Naive thymus-derived CD4-positive, alpha-beta T cell (primary cell): ENCODE measurements at regions of chr6 and their contacts with region 1.

Region 1: GRCh38 chr6:13711733-13712598 is at the start of gene RANBP9:
- DNase-seq: peak; percentile 86 to 92 (median 90)
- ATAC-seq: peak; percentile 90
- H3K4me3 ChIP-seq: peak within 1 kb of the TSS; percentile 85
- H3K4me3 Mint-ChIP-seq: peak within 1 kb of the TSS; percentile 91 to 100 (median 98)
- H3K27ac ChIP-seq: peak within 1 kb of the TSS; percentile 94
- H3K27ac Mint-ChIP-seq: peak within 1 kb of the TSS; percentile 93 to 99 (median 98)
- H3K4me1 ChIP-seq: peaks cover 12 to 15% of the 10 kb centered on the region in 2 donors
- H3K4me1 Mint-ChIP-seq: peaks cover 31 to 58% (median 45%) of the 10 kb centered on the region in 7 donors
- H3K27me3 ChIP-seq: no peaks in the 10 kb centered on the region
- H3K27me3 Mint-ChIP-seq: no peaks in the 10 kb centered on the region
- total RNA-seq, gene RANBP9: 45.4 to 56.9 (median 49.2) TPM

Region 2: GRCh38 chr6:13487122-13488014 is 224.6 kb before region 1 on chr6 and contains the start of gene GFOD1:
- CTCF ChIA-PET with region 1: no interaction called
- POLR2A ChIA-PET with region 1: no interaction called
- intact Hi-C with region 1: loop called (anchors 1 kb)
- DNase-seq: peak; percentile 33 to 87 (median 54)
- ATAC-seq: peak; percentile 90
- H3K4me3 ChIP-seq: peak within 1 kb of the TSS; percentile 80
- H3K4me3 Mint-ChIP-seq: peak within 1 kb of the TSS; percentile 78 to 96 (median 92)
- H3K27ac ChIP-seq: peak within 1 kb of the TSS; percentile 23
- H3K27ac Mint-ChIP-seq: peak within 1 kb of the TSS in 7 of 9 donors; percentile 35 to 76 (median 65)
- H3K4me1 ChIP-seq: peaks cover 4 to 9% of the 10 kb centered on the region in 2 donors
- H3K4me1 Mint-ChIP-seq: peaks cover 23 to 40% (median 30%) of the 10 kb centered on the region in 7 donors
- H3K27me3 ChIP-seq: no peaks in the 10 kb centered on the region
- H3K27me3 Mint-ChIP-seq: peaks cover 0 to 14% (median 12%) of the 10 kb centered on the region in 5 donors
- total RNA-seq, gene GFOD1: 0.73 to 10.8 (median 2.0) TPM

Region 3: GRCh38 chr6:13624871-13625288 is 87.1 kb before region 1 on chr6:
- CTCF ChIA-PET with region 1: interaction called, 3 read pairs
- POLR2A ChIA-PET with region 1: interaction called, 4 read pairs
- intact Hi-C with region 1: loop called in 1 of 2 experiments (anchors 2 kb)
- DNase-seq: peak in 6 of 9 donors; percentile 14 to 50 (median 40)
- ATAC-seq: peak; percentile 88
- H3K4me3 ChIP-seq: no peak overlapping the region
- H3K4me3 Mint-ChIP-seq: no peak overlapping the region
- H3K27ac ChIP-seq: no peak overlapping the region
- H3K27ac Mint-ChIP-seq: peak overlapping the region in 8 of 9 donors; percentile 23 to 88 (median 58)
- H3K4me1 ChIP-seq: no peaks in the 10 kb centered on the region
- H3K4me1 Mint-ChIP-seq: peaks cover 0 to 27% (median 12%) of the 10 kb centered on the region in 7 donors
- H3K27me3 ChIP-seq: no peaks in the 10 kb centered on the region
- H3K27me3 Mint-ChIP-seq: no peaks in the 10 kb centered on the region

Region 4: GRCh38 chr6:13687917-13688351 is 24.0 kb before region 1 on chr6:
- CTCF ChIA-PET with region 1: interaction called, 11 read pairs
- POLR2A ChIA-PET with region 1: interaction called, 39 read pairs
- intact Hi-C with region 1: loop called in 1 of 2 experiments (anchors 1 kb)
- DNase-seq: peak in 7 of 9 donors; percentile 37 to 76 (median 64)
- ATAC-seq: peak; percentile 87
- H3K4me3 ChIP-seq: peak overlapping the region; percentile 13
- H3K4me3 Mint-ChIP-seq: peak overlapping the region; percentile 33 to 83 (median 70)
- H3K27ac ChIP-seq: peak overlapping the region; percentile 66
- H3K27ac Mint-ChIP-seq: peak overlapping the region; percentile 53 to 97 (median 94)
- H3K4me1 ChIP-seq: peaks cover 43 to 54% of the 10 kb centered on the region in 2 donors
- H3K4me1 Mint-ChIP-seq: peaks cover 40 to 73% (median 65%) of the 10 kb centered on the region in 7 donors
- H3K27me3 ChIP-seq: no peaks in the 10 kb centered on the region
- H3K27me3 Mint-ChIP-seq: no peaks in the 10 kb centered on the region

Region 5: GRCh38 chr6:13725570-13725969 is 13.6 kb after region 1 on chr6:
- CTCF ChIA-PET with region 1: interaction called, 4 read pairs
- POLR2A ChIA-PET with region 1: interaction called, 11 read pairs
- intact Hi-C with region 1: loop called in 1 of 2 experiments (anchors 1 kb)
- DNase-seq: peak in 1 of 9 donors; percentile 13
- ATAC-seq: peak; percentile 53
- H3K4me3 ChIP-seq: no peak overlapping the region
- H3K4me3 Mint-ChIP-seq: peak overlapping the region in 3 of 10 donors; percentile 24 to 66 (median 54)
- H3K27ac ChIP-seq: no peak overlapping the region
- H3K27ac Mint-ChIP-seq: peak overlapping the region in 3 of 9 donors; percentile 23 to 89 (median 85)
- H3K4me1 ChIP-seq: peaks cover 5 to 7% of the 10 kb centered on the region in 2 donors
- H3K4me1 Mint-ChIP-seq: peaks cover 12 to 27% (median 21%) of the 10 kb centered on the region in 7 donors
- H3K27me3 ChIP-seq: no peaks in the 10 kb centered on the region
- H3K27me3 Mint-ChIP-seq: peaks cover 0 to 2% (median 0%) of the 10 kb centered on the region in 5 donors

Region 6: DNA sequence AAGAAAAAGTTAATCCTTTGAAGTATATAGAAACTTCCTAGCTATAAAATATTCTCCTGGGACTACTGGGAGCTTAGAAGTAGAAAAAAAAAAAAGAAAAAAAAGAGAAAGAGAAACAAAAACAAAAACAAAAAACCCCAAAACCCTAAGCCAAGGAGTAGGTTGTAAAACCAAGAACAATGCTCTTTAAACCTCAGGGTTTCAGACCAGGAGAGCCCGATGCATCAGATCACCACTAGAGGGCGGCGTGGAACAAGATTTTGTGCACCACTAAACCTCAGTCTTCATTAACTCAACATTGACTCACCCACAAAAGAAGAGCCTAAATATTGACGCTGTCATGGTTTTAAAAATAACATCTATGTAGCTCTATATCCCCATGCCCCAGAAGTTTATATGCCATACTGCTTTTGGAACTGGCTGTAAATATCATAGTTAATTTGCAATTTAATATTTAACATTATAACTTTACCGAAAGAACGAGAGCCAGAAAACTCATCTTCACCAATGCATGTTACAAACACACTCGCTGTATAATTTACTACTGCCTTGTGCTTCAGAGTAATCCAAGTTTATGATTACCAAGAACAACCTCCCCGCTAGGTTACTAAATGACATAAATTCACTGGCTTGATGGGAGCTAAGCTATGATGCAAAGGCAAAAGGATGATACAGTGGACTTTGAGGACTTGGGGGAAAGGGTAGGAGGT is 83.2 kb after region 1 on chr6:
- CTCF ChIA-PET with region 1: interaction called, 3 read pairs
- POLR2A ChIA-PET with region 1: no interaction called
- intact Hi-C with region 1: loop called in 1 of 2 experiments (anchors 5 kb)
- DNase-seq: peak; percentile 54 to 80 (median 77)
- ATAC-seq: peak; percentile 98
- H3K4me3 ChIP-seq: no peak overlapping the region
- H3K4me3 Mint-ChIP-seq: no peak overlapping the region
- H3K27ac ChIP-seq: no peak overlapping the region
- H3K27ac Mint-ChIP-seq: peak overlapping the region in 5 of 9 donors; percentile 7 to 50 (median 27)
- H3K4me1 ChIP-seq: no peaks in the 10 kb centered on the region
- H3K4me1 Mint-ChIP-seq: peaks cover 5 to 16% (median 6%) of the 10 kb centered on the region in 7 donors
- H3K27me3 ChIP-seq: no peaks in the 10 kb centered on the region
- H3K27me3 Mint-ChIP-seq: no peaks in the 10 kb centered on the region

Region 7: GRCh38 chr6:14001329-14002012 is 289.5 kb after region 1 on chr6:
- CTCF ChIA-PET with region 1: no interaction called
- POLR2A ChIA-PET with region 1: no interaction called
- intact Hi-C with region 1: no loop called
- DNase-seq: no peak
- ATAC-seq: no peak
- H3K4me3 ChIP-seq: no peak overlapping the region
- H3K4me3 Mint-ChIP-seq: no peak overlapping the region
- H3K27ac ChIP-seq: no peak overlapping the region
- H3K27ac Mint-ChIP-seq: no peak overlapping the region
- H3K4me1 ChIP-seq: no peaks in the 10 kb centered on the region
- H3K4me1 Mint-ChIP-seq: no peaks in the 10 kb centered on the region
- H3K27me3 ChIP-seq: no peaks in the 10 kb centered on the region
- H3K27me3 Mint-ChIP-seq: peaks cover 9 to 28% (median 20%) of the 10 kb centered on the region in 5 donors

Region 8: DNA sequence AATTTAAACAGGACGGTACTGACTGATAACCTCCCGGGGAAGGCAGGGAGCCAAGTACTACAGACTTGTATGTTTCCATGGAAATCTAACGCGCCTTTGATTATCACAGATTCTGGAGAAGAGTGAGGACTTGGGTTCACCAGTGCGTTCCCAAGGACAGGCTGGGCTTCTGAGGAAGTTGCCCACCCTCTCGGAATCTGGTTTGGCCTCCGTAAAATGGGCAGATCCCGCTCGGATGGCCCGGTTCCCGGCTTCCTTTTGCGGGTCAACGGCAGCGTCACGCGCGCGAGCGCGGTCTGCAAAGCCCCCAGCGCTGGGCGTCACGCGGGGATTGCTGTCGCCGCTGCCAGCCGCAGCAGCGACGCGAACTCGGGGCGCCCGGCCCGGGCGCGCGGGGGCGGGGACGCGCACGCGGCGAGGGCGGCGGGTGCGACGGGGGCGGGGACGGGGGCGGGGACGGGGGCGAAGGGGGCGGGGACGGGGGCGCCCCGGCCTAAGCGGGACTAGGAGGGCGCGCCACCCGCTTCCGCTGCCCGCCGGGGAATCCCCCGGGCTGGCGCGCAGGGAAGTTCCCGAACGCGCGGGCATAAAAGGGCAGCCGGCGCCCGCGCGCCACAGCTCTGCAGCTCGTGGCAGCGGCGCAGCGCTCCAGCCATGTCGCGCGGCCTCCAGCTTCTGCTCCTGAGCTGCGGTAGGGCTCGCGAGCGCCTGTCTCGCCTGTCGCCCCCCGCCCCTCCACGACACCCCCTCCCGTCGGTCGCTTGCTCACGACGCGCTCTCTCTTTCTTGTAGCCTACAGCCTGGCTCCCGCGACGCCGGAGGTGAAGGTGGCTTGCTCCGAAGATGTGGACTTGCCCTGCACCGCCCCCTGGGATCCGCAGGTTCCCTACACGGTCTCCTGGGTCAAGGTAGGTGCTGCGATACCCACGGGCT is 405.5 kb after region 1 on chr6 and contains the start of gene CD83:
- CTCF ChIA-PET with region 1: no interaction called
- POLR2A ChIA-PET with region 1: no interaction called
- intact Hi-C with region 1: loop called in 1 of 2 experiments (anchors 2 kb)
- DNase-seq: peak; percentile 79 to 89 (median 84)
- ATAC-seq: peak; percentile 94
- H3K4me3 ChIP-seq: peak within 1 kb of the TSS; percentile 91
- H3K4me3 Mint-ChIP-seq: peak within 1 kb of the TSS; percentile 87 to 97 (median 93)
- H3K27ac ChIP-seq: peak within 1 kb of the TSS; percentile 87
- H3K27ac Mint-ChIP-seq: peak within 1 kb of the TSS; percentile 91 to 96 (median 94)
- H3K4me1 ChIP-seq: peaks cover 11 to 15% of the 10 kb centered on the region in 2 donors
- H3K4me1 Mint-ChIP-seq: peaks cover 18 to 41% (median 28%) of the 10 kb centered on the region in 7 donors
- H3K27me3 ChIP-seq: no peaks in the 10 kb centered on the region
- H3K27me3 Mint-ChIP-seq: peaks cover 0 to 35% (median 0%) of the 10 kb centered on the region in 5 donors
- total RNA-seq, gene CD83: 5.0 to 113 (median 18.3) TPM